ENCODE measurements at regions of chr15 and their contacts with region 1.

Region 1: DNA sequence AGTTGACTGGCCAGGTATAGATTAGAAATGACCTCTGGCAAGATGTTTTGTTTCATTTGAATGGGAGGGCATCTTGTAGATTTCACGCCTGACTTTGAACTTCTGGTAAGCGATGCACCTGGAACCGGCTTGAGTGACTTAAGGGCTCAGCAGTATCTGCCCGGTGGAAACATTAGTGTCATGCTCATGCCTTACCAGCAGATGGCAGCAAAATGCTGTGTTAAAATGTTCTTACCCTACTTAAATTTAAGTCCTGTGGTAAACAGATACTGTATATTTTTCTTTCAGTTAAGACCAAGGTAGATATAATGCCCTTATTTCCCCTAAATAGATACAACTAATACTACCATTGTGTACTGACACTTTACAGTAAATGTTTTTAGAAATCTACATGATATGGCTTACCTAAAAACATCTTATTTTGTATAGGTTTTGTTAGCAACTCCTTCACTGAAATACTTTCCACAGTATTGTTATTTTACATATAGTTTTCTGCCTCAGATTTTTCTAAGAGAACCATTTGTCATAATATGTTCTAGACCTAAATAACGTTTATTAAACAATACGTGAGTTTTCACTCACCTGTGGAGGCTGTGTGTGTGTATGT is 25.5 kb downstream of the ASB7 start:
- DNase-seq: peak in 1 of 2 donors; percentile 53
- ATAC-seq: peak; percentile 90
- H3K4me3 ChIP-seq: no peak overlapping the region
- H3K27ac ChIP-seq: no peak overlapping the region
- H3K4me1 ChIP-seq: no peaks in the 10 kb centered on the region
- H3K27me3 ChIP-seq: no peaks in the 10 kb centered on the region

Region 2: GRCh38 chr15:100559330-100559729 is 68.6 kb before region 1 on chr15:
- intact Hi-C with region 1: no loop called
- DNase-seq: no peak
- ATAC-seq: peak; percentile 48
- H3K4me3 ChIP-seq: no peak overlapping the region
- H3K27ac ChIP-seq: no peak overlapping the region
- H3K4me1 ChIP-seq: no peaks in the 10 kb centered on the region
- H3K27me3 ChIP-seq: no peaks in the 10 kb centered on the region

Region 3: DNA sequence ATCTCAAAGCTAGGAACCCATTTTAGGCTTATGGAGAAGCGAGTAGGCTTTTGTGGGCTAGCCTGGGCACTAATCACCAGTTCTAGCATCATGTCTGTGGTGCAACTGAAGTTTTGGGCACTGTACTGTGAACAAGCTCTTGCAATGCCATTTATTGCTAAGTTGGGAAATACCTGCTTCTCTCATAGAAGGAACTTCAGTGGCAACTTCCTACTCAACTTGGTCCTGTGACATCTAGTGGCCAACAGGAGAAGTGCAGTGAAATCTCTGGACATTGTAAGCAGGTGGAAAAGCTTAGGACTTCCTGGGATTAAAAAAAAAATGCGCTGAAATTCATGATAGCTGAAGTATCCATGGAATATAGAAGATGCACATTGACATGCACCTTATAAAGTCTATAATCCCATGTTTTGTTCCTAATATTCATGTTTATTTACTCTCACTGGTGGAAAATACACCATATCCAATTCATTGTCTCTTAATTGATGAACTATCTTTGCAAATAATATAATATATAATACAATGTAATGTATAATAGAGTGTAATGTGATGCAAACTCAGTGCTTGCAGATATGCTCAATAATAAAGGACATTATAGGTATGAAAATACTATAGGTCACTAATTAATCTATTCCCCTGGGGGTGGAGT is 245.3 kb after region 1 on chr15:
- intact Hi-C with region 1: loop called (anchors 1 to 2 kb)
- DNase-seq: peak in 1 of 2 donors; percentile 56
- ATAC-seq: peak; percentile 86
- H3K4me3 ChIP-seq: no peak overlapping the region
- H3K27ac ChIP-seq: no peak overlapping the region
- H3K4me1 ChIP-seq: no peaks in the 10 kb centered on the region
- H3K27me3 ChIP-seq: no peaks in the 10 kb centered on the region

Region 4: DNA sequence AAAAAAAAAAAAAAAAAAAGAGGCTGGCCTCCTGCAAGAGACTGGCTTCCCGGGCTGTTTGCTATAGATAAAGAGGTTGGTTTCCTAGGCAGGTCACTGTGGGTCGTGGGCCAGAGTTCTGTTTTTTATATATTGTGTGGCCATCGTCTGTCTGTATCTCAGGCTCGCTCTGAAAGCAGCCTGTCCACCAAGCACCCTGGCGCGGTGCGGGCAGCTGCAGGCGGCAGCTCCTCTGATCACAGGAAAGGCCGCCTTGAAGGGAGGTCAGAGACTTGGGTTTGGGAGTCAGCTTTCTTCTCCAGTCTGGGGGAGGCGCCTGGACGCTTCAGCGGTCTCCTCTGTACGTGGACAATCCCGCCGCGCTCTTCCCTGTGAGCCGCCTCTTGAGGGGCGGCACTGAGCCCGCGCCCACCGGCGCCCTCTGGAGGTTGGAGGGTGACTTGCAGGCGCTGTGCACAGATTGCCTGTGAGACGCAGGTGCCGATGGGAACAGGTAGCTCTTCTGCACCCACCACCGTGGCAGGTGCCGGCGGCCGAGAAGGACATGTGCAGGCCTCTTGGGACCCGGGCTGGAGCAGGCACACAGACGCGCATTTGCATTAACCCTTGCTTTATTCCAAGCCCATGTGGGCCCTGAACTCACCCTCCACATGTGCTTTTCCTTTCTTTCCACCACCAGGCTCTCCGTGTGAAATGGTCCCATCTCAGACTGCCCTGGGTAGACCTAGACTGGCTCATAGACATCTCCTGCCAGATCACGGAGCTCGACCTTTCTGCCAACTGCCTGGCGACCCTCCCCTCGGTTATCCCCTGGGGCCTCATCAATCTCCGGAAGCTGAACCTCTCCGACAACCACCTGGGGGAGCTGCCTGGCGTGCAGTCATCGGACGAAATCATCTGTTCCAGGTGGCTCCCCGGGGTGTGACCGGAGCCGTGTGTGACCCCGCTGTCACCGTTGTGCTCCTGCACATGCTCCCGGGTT is 380.6 kb after region 1 on chr15:
- intact Hi-C with region 1: loop called (anchors 1 to 2 kb)
- DNase-seq: peak; percentile 87 to 94
- ATAC-seq: peak; percentile 91
- H3K4me3 ChIP-seq: peak overlapping the region in 1 of 2 donors; percentile 40
- H3K27ac ChIP-seq: no peak overlapping the region
- H3K4me1 ChIP-seq: no peaks in the 10 kb centered on the region
- H3K27me3 ChIP-seq: no peaks in the 10 kb centered on the region

Measured in aorta (tissue), 5 donors.